MCF 10A (cell line): ENCODE measurements at regions of chr3 and their contacts with region 1.

Region 1: GRCh38 chr3:111967651-111968274 is 11.1 kb upstream of the ABHD10 start:
- DNase-seq: peak; percentile 86
- H3K4me3 Mint-ChIP-seq: no peak overlapping the region
- H3K27ac Mint-ChIP-seq: peak overlapping the region; percentile 5
- H3K4me1 Mint-ChIP-seq: peaks cover 11% of the 10 kb centered on the region
- H3K27me3 Mint-ChIP-seq: no peaks in the 10 kb centered on the region
- CTCF ChIP-seq: peak; percentile 86

Region 2: DNA sequence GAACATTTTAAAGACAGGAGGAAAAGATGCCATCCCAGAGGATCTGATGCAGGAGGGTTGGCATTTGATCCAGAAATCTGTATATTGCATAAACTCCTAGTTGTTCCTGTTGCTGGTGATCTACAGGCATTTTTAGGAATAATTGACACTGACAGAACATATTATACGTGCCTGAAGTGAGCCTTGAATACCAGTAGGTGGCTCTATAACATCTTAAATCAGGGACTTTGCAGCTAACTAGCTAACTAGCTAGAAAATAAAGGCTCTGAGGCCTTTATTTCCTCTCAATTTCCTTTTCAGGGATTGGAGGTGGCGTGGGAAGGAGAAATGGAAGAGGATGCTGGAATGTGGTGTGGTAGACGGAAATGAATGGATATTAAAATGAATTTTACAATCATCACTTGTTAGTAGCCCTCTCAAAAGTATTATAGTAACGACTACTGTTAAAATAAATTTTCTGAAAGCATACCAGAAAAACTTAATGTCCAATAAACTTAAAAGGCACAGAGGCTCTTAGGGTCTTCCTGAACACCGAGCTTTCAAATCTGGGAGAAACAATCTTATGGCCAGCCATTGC is 298.8 kb before region 1 on chr3:
- CTCF ChIA-PET with region 1: interaction called, 18 read pairs
- POLR2A ChIA-PET with region 1: no interaction called
- intact Hi-C with region 1: no loop called
- DNase-seq: peak; percentile 61
- H3K4me3 Mint-ChIP-seq: no peak overlapping the region
- H3K27ac Mint-ChIP-seq: peak overlapping the region; percentile 10
- H3K4me1 Mint-ChIP-seq: peaks cover 33% of the 10 kb centered on the region
- H3K27me3 Mint-ChIP-seq: no peaks in the 10 kb centered on the region
- CTCF ChIP-seq: peak; percentile 71

Region 3: GRCh38 chr3:111895079-111895478 is 72.7 kb before region 1 on chr3:
- CTCF ChIA-PET with region 1: interaction called, 19 read pairs
- POLR2A ChIA-PET with region 1: interaction called, 6 read pairs
- intact Hi-C with region 1: loop called (anchors 1 kb)
- DNase-seq: peak; percentile 63
- H3K4me3 Mint-ChIP-seq: no peak overlapping the region
- H3K27ac Mint-ChIP-seq: peak overlapping the region; percentile 69
- H3K4me1 Mint-ChIP-seq: peaks cover 14% of the 10 kb centered on the region
- H3K27me3 Mint-ChIP-seq: no peaks in the 10 kb centered on the region
- CTCF ChIP-seq: peak; percentile 46

Region 4: DNA sequence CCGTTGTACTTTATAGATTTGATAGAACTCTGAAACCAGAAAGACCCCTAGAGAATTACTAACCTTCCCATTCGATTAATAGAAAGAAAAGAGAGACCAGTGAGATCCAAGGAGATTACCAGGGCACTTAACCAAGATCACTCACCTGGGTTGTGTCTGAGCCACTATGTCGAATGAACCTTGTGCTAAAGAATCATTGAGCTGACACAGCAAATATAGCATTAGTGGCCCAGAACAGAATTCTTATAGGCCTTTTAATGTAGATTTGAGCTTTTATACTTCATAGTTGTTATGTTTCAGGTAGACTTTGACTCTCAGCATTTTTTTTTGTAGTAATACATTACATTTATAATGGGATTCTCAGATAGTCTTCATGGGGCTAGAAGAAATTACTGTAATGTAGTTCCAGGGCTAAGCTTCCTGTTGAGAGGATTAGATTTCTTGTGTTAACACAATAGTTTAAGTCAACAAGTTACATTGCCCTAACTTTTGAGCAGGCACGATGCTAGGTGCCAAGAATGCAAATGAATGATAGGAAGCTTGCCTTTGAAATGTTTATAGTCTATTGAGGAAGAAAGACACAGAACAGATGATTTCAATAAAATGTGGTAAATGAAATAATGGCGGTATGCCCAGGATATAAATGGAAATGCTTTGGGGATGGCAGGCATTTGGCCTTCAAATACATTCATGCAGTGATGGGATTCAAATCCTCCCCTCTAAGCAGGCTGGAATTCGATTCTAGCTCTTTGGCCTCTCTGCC is 13.4 kb before region 1 on chr3:
- CTCF ChIA-PET with region 1: interaction called, 12 read pairs
- POLR2A ChIA-PET with region 1: interaction called, 6 read pairs
- intact Hi-C with region 1: no loop called
- DNase-seq: no peak
- H3K4me3 Mint-ChIP-seq: no peak overlapping the region
- H3K27ac Mint-ChIP-seq: no peak overlapping the region
- H3K4me1 Mint-ChIP-seq: no peaks in the 10 kb centered on the region
- H3K27me3 Mint-ChIP-seq: no peaks in the 10 kb centered on the region
- CTCF ChIP-seq: no peak

Region 5: GRCh38 chr3:111978493-111979433 is 11.0 kb after region 1 on chr3 and contains the start of gene ABHD10:
- CTCF ChIA-PET with region 1: interaction called, 29 read pairs
- POLR2A ChIA-PET with region 1: interaction called, 20 read pairs
- intact Hi-C with region 1: no loop called
- DNase-seq: peak; percentile 98
- H3K4me3 Mint-ChIP-seq: peak within 1 kb of the TSS; percentile 85
- H3K27ac Mint-ChIP-seq: peak within 1 kb of the TSS; percentile 66
- H3K4me1 Mint-ChIP-seq: peaks cover 5% of the 10 kb centered on the region
- H3K27me3 Mint-ChIP-seq: no peaks in the 10 kb centered on the region
- CTCF ChIP-seq: no peak
- total RNA-seq, gene ABHD10: 26.0 and 34.1 TPM in 2 replicates